K562 (cell line): ENCODE measurements at regions of chr1 and their contacts with region 1.

Region 1: DNA sequence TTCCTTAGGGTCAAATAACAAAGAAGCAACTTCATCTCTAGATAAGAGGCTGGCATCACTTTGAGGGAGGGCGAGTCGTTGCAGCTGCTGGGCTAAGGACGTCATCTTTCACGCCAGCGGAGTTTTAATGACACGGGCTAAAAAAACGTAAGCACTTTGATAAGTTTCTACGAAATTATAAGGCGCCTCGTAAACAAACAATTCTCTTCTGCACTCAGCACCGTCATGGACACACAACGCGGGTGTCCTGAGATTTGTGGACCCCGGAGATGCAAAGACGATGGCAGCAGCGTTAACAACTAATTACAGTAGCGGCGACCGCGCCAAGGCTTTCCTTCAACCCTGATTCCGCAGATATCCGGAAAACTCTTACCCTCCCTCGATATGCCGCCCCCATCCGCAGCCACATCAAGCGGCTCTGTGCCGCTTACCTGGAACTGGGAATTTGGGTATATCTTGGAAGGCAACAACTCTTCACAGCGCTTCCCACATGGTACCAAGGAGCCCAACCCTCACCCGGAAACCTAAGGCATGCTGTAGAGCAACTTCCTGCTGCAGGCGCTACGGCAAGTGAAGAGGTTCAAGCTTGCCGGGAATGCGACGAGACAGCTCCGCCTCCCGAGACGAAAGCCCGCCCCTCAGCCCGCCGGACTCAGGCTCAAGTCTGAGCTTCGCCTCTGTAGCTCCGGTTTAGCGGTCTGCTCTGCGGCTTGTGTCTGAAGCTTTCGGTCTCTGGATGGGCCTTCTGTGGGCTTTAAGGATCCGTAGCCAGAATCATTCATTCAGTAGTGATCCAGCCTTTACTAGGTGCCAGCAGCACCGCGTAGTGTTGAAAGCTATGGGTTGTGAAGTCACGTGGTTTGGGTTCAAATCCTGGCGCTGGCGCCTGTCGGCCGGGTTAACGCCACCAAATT is at the start of gene HEATR1:
- DNase-seq: peak; percentile 93 to 98 (median 94)
- ATAC-seq: peak; percentile 98
- H3K4me3 ChIP-seq: peak within 1 kb of the TSS; percentile 70
- H3K27ac ChIP-seq: peak within 1 kb of the TSS; percentile 79
- H3K4me1 ChIP-seq: peaks cover 4 to 10% of the 10 kb centered on the region in 2 experiments; a peak in 2 of 5 replicates
- H3K27me3 ChIP-seq: no peaks in the 10 kb centered on the region; a peak in 1 of 5 replicates
- CTCF ChIP-seq: 0 out of 6 replicates have a peak, but pooled peaks of 1 of the 3 experiments have one; percentile 16
- EP300 ChIP-seq: peak; percentile 61; the same call in 1 of the 2 replicates
- POLR2A ChIP-seq: peak; percentile 94
- RAD21 ChIP-seq: no peak
- polyA plus RNA-seq, gene HEATR1: 28.3 to 30.9 TPM

Region 2: GRCh38 chr1:236275586-236275985 is 328.7 kb before region 1 on chr1:
- CTCF ChIA-PET with region 1: no interaction called
- POLR2A ChIA-PET with region 1: no interaction called
- in situ Hi-C with region 1: no loop called
- intact Hi-C with region 1: no loop called
- DNase-seq: no peak
- ATAC-seq: no peak
- H3K4me3 ChIP-seq: no peak overlapping the region
- H3K27ac ChIP-seq: no peak overlapping the region
- H3K4me1 ChIP-seq: peaks cover under 1 to 5% of the 10 kb centered on the region in 2 experiments; a peak in 3 of 5 replicates
- H3K27me3 ChIP-seq: no peaks in the 10 kb centered on the region
- CTCF ChIP-seq: no peak
- EP300 ChIP-seq: no peak
- POLR2A ChIP-seq: no peak
- RAD21 ChIP-seq: no peak

Region 3: DNA sequence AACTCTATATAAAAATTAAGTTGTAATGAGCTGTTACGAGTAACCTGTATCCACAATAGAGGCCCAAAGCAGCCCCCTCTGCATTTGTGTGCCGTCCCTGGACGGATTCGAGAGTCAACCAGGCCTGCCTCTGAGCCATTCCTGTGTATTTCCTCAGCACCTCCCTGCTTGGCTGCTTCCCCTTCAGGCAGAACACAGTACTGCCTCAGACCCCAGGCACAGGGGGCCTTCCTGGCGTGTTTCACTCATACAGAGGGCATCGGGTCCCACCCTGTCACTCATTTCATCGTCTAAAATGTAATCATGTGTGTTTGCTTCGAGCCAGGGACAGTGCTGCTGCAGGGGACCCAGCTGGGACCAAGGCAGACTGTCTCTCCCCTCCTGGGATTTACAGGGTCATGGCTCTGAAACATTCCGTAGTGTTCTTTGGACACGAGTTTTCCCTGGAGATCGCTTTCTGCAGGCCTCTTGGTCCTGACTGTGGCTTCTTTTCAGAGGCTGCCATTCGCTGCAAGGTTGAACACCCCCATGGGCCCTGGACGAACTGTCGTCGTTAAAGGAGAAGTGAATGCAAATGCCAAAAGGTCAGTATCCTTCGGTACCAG is 61.1 kb before region 1 on chr1:
- CTCF ChIA-PET with region 1: no interaction called
- POLR2A ChIA-PET with region 1: no interaction called
- in situ Hi-C with region 1: no loop called
- intact Hi-C with region 1: no loop called
- DNase-seq: peak in 1 of 4 experiments; percentile 19
- ATAC-seq: peak; percentile 74
- H3K4me3 ChIP-seq: no peak overlapping the region
- H3K27ac ChIP-seq: no peak overlapping the region
- H3K4me1 ChIP-seq: no peaks in the 10 kb centered on the region
- H3K27me3 ChIP-seq: no peaks in the 10 kb centered on the region
- CTCF ChIP-seq: peak in 2 of 3 experiments; percentile 26 to 31; a peak in 2 of 6 replicates
- EP300 ChIP-seq: no peak
- POLR2A ChIP-seq: no peak; the same call in 1 of the 2 replicates
- RAD21 ChIP-seq: no peak

Region 4: GRCh38 chr1:236759252-236759859 is 155.1 kb after region 1 on chr1:
- CTCF ChIA-PET with region 1: interaction called, 6 read pairs
- POLR2A ChIA-PET with region 1: no interaction called
- in situ Hi-C with region 1: no loop called
- intact Hi-C with region 1: loop called (anchors 5 kb)
- DNase-seq: peak; percentile 47 to 75 (median 62)
- ATAC-seq: peak; percentile 75
- H3K4me3 ChIP-seq: no peak overlapping the region
- H3K27ac ChIP-seq: no peak overlapping the region
- H3K4me1 ChIP-seq: peaks cover 2 to 8% of the 10 kb centered on the region in 2 experiments; a peak in 3 of 5 replicates
- H3K27me3 ChIP-seq: peaks cover 0 to 9% of the 10 kb centered on the region in 2 experiments; a peak in 2 of 5 replicates
- CTCF ChIP-seq: peak; percentile 51 to 77 (median 77)
- EP300 ChIP-seq: no peak
- POLR2A ChIP-seq: no peak
- RAD21 ChIP-seq: peak; percentile 65 to 78

Region 5: DNA sequence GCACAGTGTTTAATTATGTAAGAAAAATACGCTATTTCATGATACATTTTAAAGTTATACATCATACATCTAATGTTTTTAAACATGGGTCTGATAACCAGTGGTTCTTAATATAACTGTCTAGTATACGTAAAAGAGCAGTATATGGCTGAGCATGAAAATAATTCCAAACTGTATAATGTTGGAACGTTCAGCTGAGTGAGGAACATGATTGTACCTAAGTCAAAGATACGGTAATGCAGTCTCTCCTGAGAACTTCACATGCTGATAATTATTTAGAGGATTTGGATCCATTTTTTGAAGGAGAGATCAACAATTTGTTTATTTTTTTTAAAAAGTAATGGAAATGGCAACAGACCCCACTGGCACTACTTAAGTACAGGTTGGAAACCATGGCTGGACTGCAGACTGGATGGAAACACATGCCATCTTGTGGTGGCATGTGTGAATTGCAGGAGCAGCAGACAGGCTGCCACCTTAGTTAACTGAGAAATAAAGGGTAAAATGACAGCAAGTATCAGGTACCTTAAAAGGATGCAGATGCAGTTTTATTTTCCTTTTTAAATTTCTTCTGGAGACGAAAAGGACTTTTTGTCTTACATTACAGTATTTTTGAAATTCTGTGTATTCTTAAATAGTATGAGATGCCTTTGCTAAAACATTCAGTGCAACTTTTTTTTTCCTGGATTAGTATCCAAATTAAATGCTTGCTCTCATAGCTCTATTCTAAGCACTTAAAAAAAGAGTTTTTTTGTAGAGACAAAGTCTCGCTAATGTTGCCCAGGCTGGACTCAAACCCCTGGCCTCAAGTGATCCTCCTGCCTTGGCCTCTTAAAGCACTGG is 264.6 kb after region 1 on chr1:
- CTCF ChIA-PET with region 1: interaction called, 8 read pairs
- POLR2A ChIA-PET with region 1: no interaction called
- in situ Hi-C with region 1: no loop called
- intact Hi-C with region 1: loop called (anchors 5 kb)
- DNase-seq: peak; percentile 69 to 82 (median 79)
- ATAC-seq: peak; percentile 95
- H3K4me3 ChIP-seq: no peak overlapping the region
- H3K27ac ChIP-seq: no peak overlapping the region
- H3K4me1 ChIP-seq: no peaks in the 10 kb centered on the region
- H3K27me3 ChIP-seq: no peaks in the 10 kb centered on the region
- CTCF ChIP-seq: peak; percentile 87 to 93 (median 92)
- EP300 ChIP-seq: no peak
- POLR2A ChIP-seq: no peak
- RAD21 ChIP-seq: peak; percentile 81 to 83

Region 6: GRCh38 chr1:237115035-237115434 is 510.8 kb after region 1 on chr1:
- CTCF ChIA-PET with region 1: no interaction called
- POLR2A ChIA-PET with region 1: no interaction called
- in situ Hi-C with region 1: no loop called
- intact Hi-C with region 1: loop called (anchors 10 kb)
- DNase-seq: peak; percentile 36 to 67 (median 64)
- ATAC-seq: peak; percentile 100
- H3K4me3 ChIP-seq: no peak overlapping the region
- H3K27ac ChIP-seq: no peak overlapping the region
- H3K4me1 ChIP-seq: no peaks in the 10 kb centered on the region
- H3K27me3 ChIP-seq: peaks cover 0 to 6% of the 10 kb centered on the region in 2 experiments; a peak in 2 of 5 replicates
- CTCF ChIP-seq: no peak
- EP300 ChIP-seq: no peak
- POLR2A ChIP-seq: no peak
- RAD21 ChIP-seq: no peak

Region 7: GRCh38 chr1:237562242-237562823 is 958.1 kb after region 1 on chr1:
- CTCF ChIA-PET with region 1: interaction called, 8 read pairs
- POLR2A ChIA-PET with region 1: no interaction called
- in situ Hi-C with region 1: loop called (anchors 25 kb)
- intact Hi-C with region 1: loop called (anchors 5 kb)
- DNase-seq: peak; percentile 35 to 75 (median 62)
- ATAC-seq: peak; percentile 93
- H3K4me3 ChIP-seq: no peak overlapping the region
- H3K27ac ChIP-seq: no peak overlapping the region
- H3K4me1 ChIP-seq: no peaks in the 10 kb centered on the region
- H3K27me3 ChIP-seq: no peaks in the 10 kb centered on the region
- CTCF ChIP-seq: peak; percentile 29 to 63 (median 58); a peak in 5 of 6 replicates
- EP300 ChIP-seq: no peak
- POLR2A ChIP-seq: no peak
- RAD21 ChIP-seq: peak; percentile 62 to 66